Activated CD4-positive, alpha-beta memory T cell treated with anti-CD3 and anti-CD28 coated beads for 36 hours (primary cell): ENCODE measurements at regions of chr3 and their contacts with region 1.

Region 1: GRCh38 chr3:186241910-186242821 is 119.9 kb downstream of the DGKG start:
- DNase-seq: peak; percentile 82
- H3K4me3 Mint-ChIP-seq: no peak overlapping the region
- H3K27ac Mint-ChIP-seq: no peak overlapping the region
- H3K4me1 Mint-ChIP-seq: peaks cover 7% of the 10 kb centered on the region
- H3K27me3 Mint-ChIP-seq: peaks cover 22% of the 10 kb centered on the region

Region 2: DNA sequence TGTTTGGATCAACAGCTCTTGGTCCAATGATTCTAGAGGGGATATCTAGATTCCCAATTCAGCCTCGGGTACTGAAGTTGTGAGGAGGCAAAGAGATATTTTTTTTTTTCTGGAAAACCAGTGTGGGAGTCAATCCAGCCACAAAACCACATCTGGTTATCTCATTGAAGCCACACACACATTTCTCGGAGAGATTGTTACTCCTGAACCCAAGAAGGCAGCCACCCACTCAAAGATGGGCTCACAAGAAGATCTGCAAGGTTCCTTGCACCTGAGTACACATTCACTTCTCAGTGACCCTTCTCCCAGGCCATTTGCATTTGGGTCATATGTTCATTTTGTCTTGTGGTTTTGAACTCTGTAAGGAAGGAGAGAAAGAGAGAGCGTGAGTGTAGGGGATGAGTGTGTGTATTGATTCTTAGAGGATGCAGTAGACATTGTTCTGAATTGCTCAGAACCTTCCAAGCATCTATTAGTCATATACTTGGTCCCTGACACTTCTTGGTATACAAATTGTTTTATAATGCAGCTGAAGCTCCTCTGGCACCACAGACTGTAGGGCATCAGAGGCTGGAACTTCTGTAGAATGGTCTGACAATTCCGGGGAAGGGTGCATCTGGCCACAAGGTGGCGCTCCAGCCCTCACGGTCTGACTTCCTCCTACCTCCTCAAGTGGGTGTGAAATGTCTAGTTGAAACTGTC is 265.0 kb before region 1 on chr3:
- CTCF ChIA-PET with region 1: interaction called, 12 read pairs
- POLR2A ChIA-PET with region 1: no interaction called
- intact Hi-C with region 1: loop called (anchors 1 kb)
- DNase-seq: peak; percentile 92
- H3K4me3 Mint-ChIP-seq: no peak overlapping the region
- H3K27ac Mint-ChIP-seq: peak overlapping the region; percentile 23
- H3K4me1 Mint-ChIP-seq: peaks cover 15% of the 10 kb centered on the region
- H3K27me3 Mint-ChIP-seq: no peaks in the 10 kb centered on the region

Region 3: GRCh38 chr3:185983495-185984141 is 258.5 kb before region 1 on chr3:
- CTCF ChIA-PET with region 1: interaction called, 12 read pairs
- POLR2A ChIA-PET with region 1: no interaction called
- intact Hi-C with region 1: loop called (anchors 1 kb)
- DNase-seq: peak; percentile 64
- H3K4me3 Mint-ChIP-seq: no peak overlapping the region
- H3K27ac Mint-ChIP-seq: no peak overlapping the region
- H3K4me1 Mint-ChIP-seq: peaks cover 4% of the 10 kb centered on the region
- H3K27me3 Mint-ChIP-seq: peaks cover 11% of the 10 kb centered on the region

Region 4: DNA sequence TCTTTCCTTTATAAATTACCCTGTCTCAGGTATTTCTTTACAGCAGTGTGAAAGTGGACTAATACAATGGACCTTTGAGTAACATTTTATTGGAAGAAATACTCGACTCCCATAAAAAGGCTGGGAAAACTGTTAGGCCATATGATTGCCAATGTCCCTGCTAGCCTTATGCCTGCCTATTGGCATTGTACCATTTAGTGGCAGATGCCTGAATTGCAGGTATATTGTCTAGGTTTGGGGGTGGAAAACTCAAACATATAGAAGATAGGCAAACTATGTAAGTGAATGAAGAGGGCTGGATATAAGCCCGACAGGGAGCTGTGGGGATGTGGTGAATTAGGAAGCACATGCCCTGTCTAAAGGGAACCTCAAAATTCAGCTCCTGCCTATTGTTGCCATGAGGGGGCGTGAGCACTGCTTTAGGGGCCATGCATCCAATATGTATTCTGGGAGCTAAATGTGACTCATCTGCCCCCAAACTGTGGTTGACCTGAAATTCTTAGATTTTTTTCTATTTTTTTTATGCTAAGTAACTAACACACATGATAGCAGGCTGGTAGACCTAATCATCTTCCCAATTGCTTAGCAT is 239.2 kb before region 1 on chr3:
- CTCF ChIA-PET with region 1: no interaction called
- POLR2A ChIA-PET with region 1: no interaction called
- intact Hi-C with region 1: loop called (anchors 5 kb)
- DNase-seq: peak; percentile 20
- H3K4me3 Mint-ChIP-seq: no peak overlapping the region
- H3K27ac Mint-ChIP-seq: no peak overlapping the region
- H3K4me1 Mint-ChIP-seq: peaks cover 13% of the 10 kb centered on the region
- H3K27me3 Mint-ChIP-seq: peaks cover 22% of the 10 kb centered on the region

Region 5: DNA sequence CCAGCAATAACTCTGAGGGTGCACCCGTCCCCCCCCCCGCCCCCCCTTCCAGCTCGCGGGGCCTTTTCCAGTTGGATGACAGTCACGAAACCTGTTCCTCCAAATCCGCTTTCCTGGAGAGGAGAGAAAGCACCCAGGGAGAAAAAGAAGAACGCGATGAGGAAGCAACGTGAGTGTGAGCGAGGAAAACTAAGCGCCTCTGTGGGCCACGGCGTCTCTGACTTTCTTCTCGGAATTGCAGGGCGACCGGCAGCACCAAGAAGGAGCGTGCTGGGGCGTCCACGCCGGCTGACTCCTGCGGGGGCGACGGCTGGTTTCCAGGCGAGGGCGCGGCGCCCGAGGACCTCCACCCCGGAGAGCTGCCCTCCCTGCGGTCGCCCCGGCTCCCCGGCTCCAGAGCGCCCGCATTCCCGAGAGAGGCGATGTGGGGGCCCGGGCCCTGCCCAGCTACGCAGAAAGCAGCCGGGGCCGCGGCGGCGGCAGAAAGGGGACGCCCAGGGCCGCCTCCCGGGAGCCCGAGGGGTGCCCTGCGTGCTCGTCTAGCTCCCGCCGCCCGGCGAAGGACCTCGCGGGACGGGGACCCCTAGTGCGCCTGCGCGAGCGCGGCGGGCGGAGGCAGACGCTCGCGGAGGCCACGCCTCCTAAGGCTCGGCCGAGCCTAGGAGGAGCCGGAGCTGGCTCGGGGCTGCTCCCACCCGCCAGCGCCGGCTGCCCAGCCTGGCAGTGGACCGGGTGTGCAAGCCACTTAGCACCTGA is 585.0 kb after region 1 on chr3:
- CTCF ChIA-PET with region 1: no interaction called
- POLR2A ChIA-PET with region 1: no interaction called
- intact Hi-C with region 1: loop called (anchors 10 kb)
- DNase-seq: peak; percentile 89
- H3K4me3 Mint-ChIP-seq: peak overlapping the region; percentile 83
- H3K27ac Mint-ChIP-seq: peak overlapping the region; percentile 51
- H3K4me1 Mint-ChIP-seq: peaks cover 28% of the 10 kb centered on the region
- H3K27me3 Mint-ChIP-seq: peaks cover 44% of the 10 kb centered on the region